ENCODE measurements at regions of chr13 and their contacts with region 1.

Region 1: GRCh38 chr13:98517576-98518310 is 59.2 kb downstream of the STK24 start:
- DNase-seq: peak; percentile 75
- H3K4me3 Mint-ChIP-seq: no peak overlapping the region
- H3K27ac Mint-ChIP-seq: peak overlapping the region; percentile 81
- H3K4me1 Mint-ChIP-seq: peaks cover 97% of the 10 kb centered on the region
- H3K27me3 Mint-ChIP-seq: no peaks in the 10 kb centered on the region

Region 2: GRCh38 chr13:98528663-98529570 is 11.2 kb after region 1 on chr13:
- CTCF ChIA-PET with region 1: interaction called, 5 read pairs
- intact Hi-C with region 1: loop called (anchors 1 kb)
- DNase-seq: peak; percentile 43
- H3K4me3 Mint-ChIP-seq: no peak overlapping the region
- H3K27ac Mint-ChIP-seq: peak overlapping the region; percentile 75
- H3K4me1 Mint-ChIP-seq: peaks cover 91% of the 10 kb centered on the region
- H3K27me3 Mint-ChIP-seq: no peaks in the 10 kb centered on the region